ENCODE measurements at regions of chr9 and their contacts with region 1.

Region 1: GRCh38 chr9:136807281-136808074 is at the start of gene RABL6:
- DNase-seq: peak; percentile 66
- H3K4me3 ChIP-seq: peak within 1 kb of the TSS; percentile 74 to 93 (median 87)
- H3K27ac ChIP-seq: peak within 1 kb of the TSS; percentile 39
- H3K4me1 ChIP-seq: peaks cover 24% of the 10 kb centered on the region
- H3K27me3 ChIP-seq: no peaks in the 10 kb centered on the region
- CTCF ChIP-seq: no peak
- total RNA-seq, gene RABL6: 53.8 to 84.3 TPM

Region 2: DNA sequence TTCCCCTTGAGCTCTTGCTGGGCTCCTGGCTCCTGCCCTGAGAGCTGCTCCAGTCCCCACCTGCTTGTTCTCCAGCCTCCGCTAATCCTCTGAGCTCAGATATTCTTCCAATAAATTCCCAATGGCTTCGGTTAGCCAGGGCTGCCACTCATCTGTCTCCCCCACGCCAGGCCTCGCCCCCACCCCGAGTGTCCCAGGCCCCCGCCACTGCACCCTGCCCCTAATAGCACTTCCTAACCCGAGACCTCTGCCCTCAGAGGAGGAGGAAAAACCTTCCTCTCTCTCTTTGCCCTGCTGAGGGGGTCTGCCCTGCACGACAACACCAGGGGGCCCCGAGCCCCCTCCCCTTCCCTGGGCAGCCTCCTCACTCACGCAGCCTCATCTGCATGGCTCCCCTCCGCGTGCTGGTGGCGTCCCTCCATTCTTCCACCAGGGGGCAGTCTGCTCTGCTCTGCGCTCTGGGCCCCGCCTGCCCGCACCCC is 37.7 kb before region 1 on chr9:
- CTCF ChIA-PET with region 1: no interaction called
- dilution Hi-C with region 1: no loop called
- in situ Hi-C with region 1: no loop called
- intact Hi-C with region 1: no loop called
- DNase-seq: no peak
- H3K4me3 ChIP-seq: no peak overlapping the region
- H3K27ac ChIP-seq: no peak overlapping the region
- H3K4me1 ChIP-seq: peaks cover under 1% of the 10 kb centered on the region
- H3K27me3 ChIP-seq: no peaks in the 10 kb centered on the region
- CTCF ChIP-seq: peak; percentile 32 to 63

Region 3: DNA sequence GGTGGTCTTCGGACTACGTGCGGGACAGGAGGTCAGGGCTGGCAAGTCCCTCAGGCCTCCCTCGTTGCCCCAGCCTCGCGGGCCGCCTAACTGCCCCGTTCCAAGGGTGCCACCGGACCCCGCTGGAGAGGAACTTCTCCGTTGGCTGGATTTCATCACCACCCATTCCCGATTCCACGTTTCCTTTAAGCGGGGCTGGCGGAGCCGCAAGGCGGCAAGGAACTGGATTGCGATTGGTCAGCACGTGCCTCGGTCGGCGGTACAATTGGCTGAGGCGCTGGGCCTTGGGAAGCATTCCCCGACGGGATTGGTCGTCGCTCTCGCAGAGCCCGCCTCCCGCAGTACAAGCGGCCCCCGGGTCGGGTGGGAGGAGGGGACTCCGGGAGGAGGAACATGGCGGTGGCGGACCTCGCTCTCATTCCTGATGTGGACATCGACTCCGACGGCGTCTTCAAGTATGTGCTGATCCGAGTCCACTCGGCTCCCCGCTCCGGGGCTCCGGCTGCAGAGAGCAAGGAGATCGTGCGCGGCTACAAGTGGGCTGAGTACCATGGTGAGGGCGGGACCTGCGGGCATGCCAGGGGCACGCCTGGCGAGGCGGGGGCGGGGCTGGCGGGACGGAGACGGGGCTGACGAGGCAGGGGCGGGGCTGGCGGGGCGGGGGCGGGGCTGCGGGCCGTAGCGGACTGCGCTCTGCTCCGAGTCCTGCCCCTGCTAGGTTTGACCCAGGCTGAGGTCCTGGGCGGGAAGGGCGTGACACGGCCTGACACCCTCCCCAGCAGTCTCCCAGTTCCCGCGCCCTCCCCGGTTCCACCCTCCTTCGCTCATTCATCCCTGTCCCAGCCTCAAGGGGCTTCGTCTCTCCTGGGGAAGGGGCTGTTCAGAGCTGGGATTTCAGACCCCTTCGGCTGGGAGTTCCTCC is 41.8 kb after region 1 on chr9 and contains the start of gene PHPT1:
- CTCF ChIA-PET with region 1: no interaction called
- dilution Hi-C with region 1: loop called (anchors 5 kb)
- in situ Hi-C with region 1: no loop called
- intact Hi-C with region 1: loop called (anchors 5 kb)
- DNase-seq: peak; percentile 98
- H3K4me3 ChIP-seq: peak within 1 kb of the TSS; percentile 82 to 93 (median 92)
- H3K27ac ChIP-seq: peak within 1 kb of the TSS; percentile 67
- H3K4me1 ChIP-seq: peaks cover 19% of the 10 kb centered on the region
- H3K27me3 ChIP-seq: peaks cover 22% of the 10 kb centered on the region
- CTCF ChIP-seq: no peak
- total RNA-seq, gene PHPT1: 55.3 to 143 TPM

Region 4: DNA sequence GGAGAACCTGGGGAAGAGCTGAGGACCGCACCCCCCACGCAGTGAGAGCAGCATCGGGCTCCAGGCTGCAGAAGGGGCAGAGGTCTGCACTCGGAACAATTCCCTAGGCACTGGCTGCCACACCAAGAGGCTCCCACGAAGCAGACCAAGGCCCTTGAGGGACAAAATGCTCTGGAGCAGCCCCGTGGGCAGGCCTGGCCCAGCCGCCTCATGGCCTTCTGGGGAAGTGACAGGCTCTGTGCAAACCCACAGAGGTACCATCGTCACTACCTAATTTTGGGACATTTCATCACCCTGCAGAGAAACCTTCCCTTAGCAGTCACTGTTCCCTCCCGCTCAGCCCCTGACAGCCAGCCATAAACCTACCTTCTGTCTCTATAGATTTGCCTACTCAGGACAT is 121.1 kb after region 1 on chr9:
- CTCF ChIA-PET with region 1: no interaction called
- dilution Hi-C with region 1: loop called (anchors 5 kb)
- in situ Hi-C with region 1: no loop called
- intact Hi-C with region 1: no loop called
- DNase-seq: no peak
- H3K4me3 ChIP-seq: no peak overlapping the region
- H3K27ac ChIP-seq: no peak overlapping the region
- H3K4me1 ChIP-seq: no peaks in the 10 kb centered on the region
- H3K27me3 ChIP-seq: no peaks in the 10 kb centered on the region
- CTCF ChIP-seq: no peak

Region 5: GRCh38 chr9:137049544-137050449 is 242.3 kb after region 1 on chr9:
- CTCF ChIA-PET with region 1: no interaction called
- dilution Hi-C with region 1: no loop called
- in situ Hi-C with region 1: no loop called
- intact Hi-C with region 1: no loop called
- DNase-seq: no peak
- H3K4me3 ChIP-seq: no peak overlapping the region
- H3K27ac ChIP-seq: no peak overlapping the region
- H3K4me1 ChIP-seq: peaks cover 37% of the 10 kb centered on the region
- H3K27me3 ChIP-seq: no peaks in the 10 kb centered on the region
- CTCF ChIP-seq: peak; percentile 49 to 61

Region 6: DNA sequence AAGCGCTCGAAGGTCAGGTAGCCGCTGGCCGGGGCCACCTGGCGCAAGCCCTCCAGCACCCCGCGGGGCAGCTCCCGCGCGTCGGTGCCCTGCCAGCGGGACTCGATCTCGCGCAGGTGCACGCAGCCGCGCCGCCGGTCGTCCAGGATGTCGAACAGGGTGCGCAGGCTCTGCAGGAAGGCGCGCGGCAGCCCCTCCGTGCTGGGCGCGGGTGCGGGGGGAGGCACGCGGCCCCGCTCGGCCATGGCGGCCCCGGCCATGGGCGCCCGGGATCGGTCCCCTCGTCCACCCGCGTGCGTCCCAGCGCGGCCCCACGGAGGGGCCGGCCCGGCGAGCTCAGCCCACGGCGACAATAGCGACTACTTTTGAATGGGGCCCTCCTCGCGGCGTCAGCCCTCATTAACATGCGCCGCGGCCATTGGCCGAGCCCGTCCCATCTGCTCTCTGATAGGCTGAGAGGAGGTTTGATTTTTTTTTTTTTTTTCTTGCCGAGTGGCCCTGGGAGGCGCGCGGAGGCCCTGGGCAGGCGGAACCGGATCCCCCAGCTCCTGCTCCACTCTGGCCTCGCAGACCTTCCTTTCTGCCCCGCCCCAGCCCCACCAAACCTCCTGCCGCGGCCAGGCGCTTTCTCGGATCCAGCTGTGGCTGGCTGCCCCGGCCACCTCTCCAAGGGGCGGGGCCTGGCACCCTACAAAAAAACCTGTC is 262.9 kb after region 1 on chr9 and contains the start of gene SAPCD2:
- CTCF ChIA-PET with region 1: no interaction called
- dilution Hi-C with region 1: no loop called
- in situ Hi-C with region 1: no loop called
- intact Hi-C with region 1: no loop called
- DNase-seq: peak; percentile 85
- H3K4me3 ChIP-seq: peak within 1 kb of the TSS; percentile 22 to 52 (median 47)
- H3K27ac ChIP-seq: no peak within 1 kb of the TSS
- H3K4me1 ChIP-seq: peaks cover 21% of the 10 kb centered on the region
- H3K27me3 ChIP-seq: no peaks in the 10 kb centered on the region
- CTCF ChIP-seq: no peak
- total RNA-seq, gene SAPCD2: 1.0 to 6.9 TPM

Region 7: DNA sequence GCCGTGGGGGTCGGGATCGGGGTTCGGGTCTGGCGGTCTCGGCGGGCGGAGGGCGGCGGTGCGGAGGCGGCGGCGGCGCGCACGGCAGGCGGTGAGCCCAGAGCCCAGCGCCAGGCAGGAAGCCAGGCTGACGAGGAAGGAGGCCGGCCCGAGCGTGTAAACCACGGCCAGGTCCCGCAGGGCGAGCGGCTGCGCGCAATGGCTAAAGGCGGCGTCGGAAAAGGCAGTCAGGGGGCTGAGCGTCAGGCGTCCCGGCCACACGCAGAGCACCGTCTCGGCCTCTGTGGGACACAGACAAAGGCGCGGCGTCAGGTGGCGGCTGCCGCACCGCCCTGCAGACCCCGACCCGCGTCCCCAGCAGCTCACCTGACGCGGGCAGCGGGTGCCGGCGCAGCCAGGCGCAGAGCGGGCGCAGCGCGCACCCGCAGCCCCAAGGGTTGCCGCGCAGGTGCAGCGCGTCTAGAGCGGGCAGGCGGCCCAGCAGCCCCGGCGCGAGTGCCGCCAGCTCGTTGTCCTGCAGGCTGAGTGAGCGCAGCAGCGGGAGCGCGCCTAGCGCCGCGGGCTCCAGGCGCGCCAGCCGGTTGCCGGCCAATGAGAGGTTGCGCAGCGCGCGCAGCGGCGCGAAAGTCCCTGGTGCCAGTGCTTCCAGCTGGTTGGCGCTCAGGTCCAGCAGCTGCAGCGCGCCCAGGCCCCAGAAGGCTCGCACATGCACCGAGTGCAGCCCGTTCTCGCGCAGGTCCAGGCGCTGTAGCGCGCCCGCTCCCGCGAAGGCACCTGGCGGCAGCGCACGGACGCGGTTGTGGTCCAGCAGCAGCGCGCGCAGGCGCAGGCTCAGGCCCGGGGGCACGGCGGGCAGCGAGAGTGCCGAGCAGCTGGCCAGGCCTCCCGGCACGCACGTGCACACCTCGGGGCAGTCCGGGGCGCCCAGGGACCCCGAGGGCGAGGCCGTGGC is 361.7 kb after region 1 on chr9:
- CTCF ChIA-PET with region 1: no interaction called
- dilution Hi-C with region 1: loop called (anchors 5 kb)
- in situ Hi-C with region 1: no loop called
- intact Hi-C with region 1: no loop called
- DNase-seq: peak; percentile 76
- H3K4me3 ChIP-seq: peak overlapping the region in 1 of 3 experiments; percentile 22
- H3K27ac ChIP-seq: no peak overlapping the region
- H3K4me1 ChIP-seq: peaks cover 12% of the 10 kb centered on the region
- H3K27me3 ChIP-seq: peaks cover 49% of the 10 kb centered on the region
- CTCF ChIP-seq: no peak

Measured in mammary epithelial cell (primary cell).